ENCODE measurements at regions of chr17 and their contacts with region 1.

Region 1: DNA sequence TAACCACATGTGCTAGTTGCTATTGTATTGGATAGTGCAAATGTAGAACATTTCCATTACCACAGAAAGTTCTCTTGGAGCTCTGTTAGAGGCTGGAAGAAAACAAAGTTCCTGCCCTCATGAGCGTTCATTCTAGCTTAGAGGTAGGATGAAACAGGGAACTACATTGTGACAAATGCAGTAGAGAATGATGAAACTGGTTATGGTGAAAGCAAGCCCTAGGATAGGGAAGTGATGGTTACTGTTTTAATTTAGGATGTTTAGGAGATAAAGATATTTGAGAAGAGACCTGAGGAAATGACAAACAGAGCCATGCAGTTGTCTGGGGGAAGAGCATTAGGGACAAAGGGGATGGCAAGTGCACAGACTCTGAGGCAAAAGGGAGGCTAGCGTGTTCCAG is 50.7 kb downstream of the AATF start:
- DNase-seq: no peak
- ATAC-seq: no peak
- H3K4me3 ChIP-seq: no peak overlapping the region
- H3K4me3 Mint-ChIP-seq: no peak overlapping the region
- H3K27ac ChIP-seq: no peak overlapping the region
- H3K27ac Mint-ChIP-seq: no peak overlapping the region
- H3K4me1 ChIP-seq: no peaks in the 10 kb centered on the region
- H3K4me1 Mint-ChIP-seq: peaks cover 2 to 21% (median 3%) of the 10 kb centered on the region in 3 donors
- H3K27me3 ChIP-seq: no peaks in the 10 kb centered on the region
- H3K27me3 Mint-ChIP-seq: no peaks in the 10 kb centered on the region

Region 2: GRCh38 chr17:36948717-36949460 is 50.6 kb before region 1 on chr17 and contains the start of gene AATF:
- CTCF ChIA-PET with region 1: no interaction called
- POLR2A ChIA-PET with region 1: interaction called in 1 of 2 experiments, 11 read pairs
- DNase-seq: peak; percentile 89 to 99 (median 93)
- ATAC-seq: peak; percentile 92 to 97 (median 96)
- H3K4me3 ChIP-seq: peak within 1 kb of the TSS; percentile 90 to 91
- H3K4me3 Mint-ChIP-seq: peak within 1 kb of the TSS; percentile 85 to 95 (median 93)
- H3K27ac ChIP-seq: peak within 1 kb of the TSS; percentile 77
- H3K27ac Mint-ChIP-seq: peak within 1 kb of the TSS; percentile 81 to 95
- H3K4me1 ChIP-seq: peaks cover 12 to 24% of the 10 kb centered on the region in 2 experiments
- H3K4me1 Mint-ChIP-seq: peaks cover 56 to 60% (median 57%) of the 10 kb centered on the region in 3 donors
- H3K27me3 ChIP-seq: peaks cover 18 to 21% of the 10 kb centered on the region in 2 experiments
- H3K27me3 Mint-ChIP-seq: peaks cover 25 to 37% of the 10 kb centered on the region in 2 donors
- total RNA-seq, gene AATF: 52.5 to 65.0 (median 59.7) TPM

Region 3: DNA sequence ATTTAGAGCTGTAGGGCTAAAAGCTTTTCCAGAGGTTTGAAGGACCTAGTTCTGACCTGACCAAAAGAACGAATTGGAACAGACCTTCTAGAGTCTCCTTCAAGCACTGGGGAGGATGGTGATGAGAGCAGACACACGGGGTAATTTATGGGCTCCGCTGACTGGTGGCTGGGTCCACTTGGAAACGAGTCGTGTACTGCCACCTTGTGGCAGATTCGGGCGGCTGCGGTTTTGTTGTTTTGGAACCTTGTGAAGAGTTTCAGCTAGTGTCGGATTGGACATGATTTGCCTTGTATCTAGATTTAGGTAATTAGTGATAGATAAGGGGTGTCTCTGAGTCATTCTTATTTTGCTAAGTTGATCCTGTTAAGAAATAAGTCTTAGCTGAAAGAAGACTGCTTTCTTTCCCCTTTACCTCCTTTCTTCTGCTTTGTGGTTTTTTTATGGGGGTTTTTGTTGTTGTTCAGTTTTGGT is 48.2 kb after region 1 on chr17:
- CTCF ChIA-PET with region 1: no interaction called
- POLR2A ChIA-PET with region 1: no interaction called
- DNase-seq: peak; percentile 54 to 85 (median 74)
- ATAC-seq: peak; percentile 66 to 83 (median 78)
- H3K4me3 ChIP-seq: no peak overlapping the region
- H3K4me3 Mint-ChIP-seq: no peak overlapping the region
- H3K27ac ChIP-seq: no peak overlapping the region
- H3K27ac Mint-ChIP-seq: no peak overlapping the region
- H3K4me1 ChIP-seq: peaks cover 2 to 6% of the 10 kb centered on the region in 2 experiments
- H3K4me1 Mint-ChIP-seq: peaks cover 12 to 18% (median 14%) of the 10 kb centered on the region in 3 donors
- H3K27me3 ChIP-seq: no peaks in the 10 kb centered on the region
- H3K27me3 Mint-ChIP-seq: no peaks in the 10 kb centered on the region

Region 4: GRCh38 chr17:37088459-37088858 is 89.0 kb after region 1 on chr17:
- CTCF ChIA-PET with region 1: no interaction called
- POLR2A ChIA-PET with region 1: no interaction called
- DNase-seq: peak in 8 of 35 experiments; percentile 4 to 69 (median 8)
- ATAC-seq: peak in 3 of 4 experiments; percentile 32 to 62 (median 34)
- H3K4me3 ChIP-seq: no peak overlapping the region
- H3K4me3 Mint-ChIP-seq: peak overlapping the region in 1 of 3 donors; percentile 62
- H3K27ac ChIP-seq: peak overlapping the region; percentile 96
- H3K27ac Mint-ChIP-seq: peak overlapping the region in 1 of 2 donors; percentile 96
- H3K4me1 ChIP-seq: peaks cover 28 to 34% of the 10 kb centered on the region in 2 experiments
- H3K4me1 Mint-ChIP-seq: peaks cover 41 to 45% (median 42%) of the 10 kb centered on the region in 3 donors
- H3K27me3 ChIP-seq: no peaks in the 10 kb centered on the region
- H3K27me3 Mint-ChIP-seq: no peaks in the 10 kb centered on the region

Measured in T-cell (primary cell).